WTC11 (cell line): ENCODE measurements at regions of chr19 and their contacts with region 1.

Region 1: DNA sequence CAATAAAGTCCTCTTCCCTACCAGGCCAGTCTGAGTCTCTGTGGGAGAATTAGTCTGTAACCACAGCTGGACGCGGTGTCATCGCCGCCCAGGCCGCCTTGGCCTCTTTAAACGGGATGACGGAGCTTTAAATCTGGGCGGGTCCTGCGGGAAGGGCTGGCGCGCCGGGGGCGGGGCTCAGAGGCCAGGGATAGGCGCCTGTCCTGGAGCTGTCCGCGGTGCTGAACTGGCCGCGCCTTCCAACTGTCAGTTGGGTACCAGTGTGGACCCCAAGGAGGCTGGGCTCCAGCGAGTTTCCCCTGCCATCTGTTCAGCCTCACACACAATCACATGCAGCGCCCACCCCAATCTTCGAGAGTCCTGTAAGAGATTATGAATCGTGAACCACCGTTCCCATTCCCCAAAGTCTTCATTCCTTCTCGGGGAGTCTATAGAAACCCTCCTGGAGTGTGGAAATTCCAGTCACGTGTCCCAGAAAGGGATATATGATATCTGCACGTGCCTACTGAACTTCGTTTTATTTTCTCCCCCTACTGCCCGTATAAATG is 11.5 kb downstream of the APLP1 start:
- DNase-seq: peak; percentile 98
- ATAC-seq: peak; percentile 95
- H3K4me3 Mint-ChIP-seq: peak overlapping the region; percentile 64
- H3K27ac Mint-ChIP-seq: peak overlapping the region; percentile 56; the same call in 1 of the 2 replicates
- H3K4me1 Mint-ChIP-seq: peaks cover 8% of the 10 kb centered on the region
- H3K27me3 Mint-ChIP-seq: peaks cover 44% of the 10 kb centered on the region
- CTCF ChIP-seq: no peak

Region 2: DNA sequence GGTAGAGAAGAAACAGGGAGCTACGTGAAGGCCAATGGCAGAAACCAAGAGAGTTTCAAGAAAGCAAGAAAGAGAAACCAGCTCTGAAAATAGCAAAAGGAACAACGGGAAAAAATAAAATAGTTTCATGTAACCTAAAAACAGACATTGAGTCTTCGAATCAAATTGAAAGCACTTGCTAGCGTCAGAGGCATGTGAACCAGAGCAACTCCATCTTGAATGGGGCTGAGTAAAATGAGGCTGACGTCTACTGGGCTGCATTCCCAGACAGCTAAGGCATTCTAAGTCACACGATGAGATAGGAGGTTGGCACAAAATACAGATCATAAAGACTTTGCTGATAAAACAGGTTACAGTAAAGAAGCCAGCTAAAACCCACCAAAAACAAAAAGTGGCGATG is 301.1 kb before region 1 on chr19:
- CTCF ChIA-PET with region 1: no interaction called
- POLR2A ChIA-PET with region 1: no interaction called
- DNase-seq: no peak
- ATAC-seq: no peak
- H3K4me3 Mint-ChIP-seq: no peak overlapping the region
- H3K27ac Mint-ChIP-seq: no peak overlapping the region
- H3K4me1 Mint-ChIP-seq: no peaks in the 10 kb centered on the region
- H3K27me3 Mint-ChIP-seq: peaks cover 48% of the 10 kb centered on the region
- CTCF ChIP-seq: no peak

Region 3: DNA sequence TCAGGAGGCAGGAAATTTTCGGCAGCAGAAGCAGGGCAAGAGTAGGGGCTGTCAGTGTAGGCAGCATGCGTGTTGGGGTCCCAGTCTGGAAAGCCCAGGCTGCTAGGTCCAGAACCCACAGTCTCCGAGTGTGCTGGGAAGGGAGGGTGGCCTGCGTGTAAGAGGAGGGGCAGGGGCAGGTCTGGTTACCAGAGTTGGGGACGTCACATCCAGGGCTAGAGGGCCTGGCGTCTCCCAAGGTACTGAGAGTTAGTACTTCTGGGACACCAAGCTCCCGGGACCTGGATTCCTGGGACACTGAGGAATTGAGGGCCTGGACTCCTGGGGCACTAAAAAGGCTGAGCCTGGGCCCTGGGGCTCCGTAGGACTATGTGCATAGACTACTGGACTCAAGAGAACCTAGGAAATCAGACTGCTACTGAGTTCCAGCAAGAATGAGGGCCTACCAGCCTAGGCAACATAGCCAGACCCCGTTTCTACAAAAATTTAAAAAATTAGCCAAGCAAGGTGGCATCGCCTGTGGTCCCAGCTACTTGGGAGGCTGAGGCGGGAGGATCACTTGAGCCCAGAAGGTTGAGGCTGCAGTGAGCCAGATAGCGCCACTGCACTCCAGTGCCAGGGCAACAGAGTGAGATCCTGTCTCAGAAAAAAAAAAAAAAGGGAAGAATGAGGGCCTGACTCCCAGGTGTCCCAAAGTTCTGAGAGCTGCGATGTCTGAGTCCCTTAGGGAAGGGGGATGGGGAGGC is 18.0 kb after region 1 on chr19:
- CTCF ChIA-PET with region 1: no interaction called
- POLR2A ChIA-PET with region 1: no interaction called
- DNase-seq: no peak
- ATAC-seq: no peak
- H3K4me3 Mint-ChIP-seq: peak overlapping the region; percentile 93
- H3K27ac Mint-ChIP-seq: no peak overlapping the region
- H3K4me1 Mint-ChIP-seq: peaks cover 11% of the 10 kb centered on the region
- H3K27me3 Mint-ChIP-seq: peaks cover 11% of the 10 kb centered on the region
- CTCF ChIP-seq: no peak

Region 4: GRCh38 chr19:35931161-35931873 is 51.5 kb after region 1 on chr19:
- CTCF ChIA-PET with region 1: interaction called, 18 read pairs
- POLR2A ChIA-PET with region 1: interaction called, 7 read pairs
- DNase-seq: peak; percentile 100
- ATAC-seq: peak; percentile 94
- H3K4me3 Mint-ChIP-seq: peak overlapping the region; percentile 64
- H3K27ac Mint-ChIP-seq: peak overlapping the region; percentile 95
- H3K4me1 Mint-ChIP-seq: peaks cover 25% of the 10 kb centered on the region
- H3K27me3 Mint-ChIP-seq: peaks cover 6% of the 10 kb centered on the region
- CTCF ChIP-seq: peak; percentile 47